CD4-positive, alpha-beta T cell (primary cell): ENCODE measurements at regions of chr10 and their contacts with region 1.

Region 1: GRCh38 chr10:31928549-31929260 is at the start of gene ARHGAP12:
- DNase-seq: peak; percentile 70 to 92 (median 82)
- ATAC-seq: peak; percentile 63
- H3K4me3 ChIP-seq: peak within 1 kb of the TSS; percentile 99
- H3K4me3 Mint-ChIP-seq: peak within 1 kb of the TSS; percentile 97
- H3K27ac ChIP-seq: peak within 1 kb of the TSS; percentile 69 to 77
- H3K27ac Mint-ChIP-seq: peak within 1 kb of the TSS; percentile 82
- H3K4me1 ChIP-seq: peaks cover 23% of the 10 kb centered on the region
- H3K4me1 Mint-ChIP-seq: peaks cover 53% of the 10 kb centered on the region
- H3K27me3 ChIP-seq: no peaks in the 10 kb centered on the region
- H3K27me3 Mint-ChIP-seq: no peaks in the 10 kb centered on the region
- CTCF ChIP-seq: no peak
- total RNA-seq, gene ARHGAP12: 40.3 to 41.1 TPM

Region 2: DNA sequence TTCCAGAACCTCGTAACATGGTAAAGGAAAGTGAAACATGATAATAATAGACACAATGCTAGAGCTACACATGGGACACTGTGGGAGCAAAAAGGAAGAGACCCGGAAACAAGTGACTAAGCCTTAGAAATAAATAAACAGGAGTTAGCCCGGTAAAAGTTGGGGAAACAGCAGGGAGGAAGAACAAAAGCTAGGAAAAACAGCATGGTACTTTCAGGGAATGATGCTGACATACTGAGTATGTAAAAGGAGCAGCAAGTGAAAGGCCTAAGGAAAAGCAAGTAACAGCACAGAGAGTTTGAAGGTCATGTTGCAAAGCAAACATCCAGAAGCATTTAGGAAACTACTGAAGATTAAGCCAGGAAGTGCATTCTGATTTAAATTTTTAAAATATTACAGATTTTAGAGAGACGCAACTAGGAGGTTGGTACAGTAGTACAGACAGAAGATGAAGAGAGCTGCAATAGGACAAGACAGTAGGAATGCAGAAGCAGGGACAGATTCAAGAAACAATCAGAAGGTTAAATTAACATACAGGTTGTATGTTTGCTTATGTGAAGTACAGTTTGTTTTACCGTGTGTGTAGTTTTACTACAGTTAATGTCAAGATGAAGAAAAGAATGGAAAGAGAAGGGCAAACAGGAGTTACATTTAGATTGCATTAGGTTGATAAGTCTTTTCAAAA is 63.7 kb before region 1 on chr10:
- CTCF ChIA-PET with region 1: interaction called, 3 read pairs
- POLR2A ChIA-PET with region 1: interaction called, 8 read pairs
- intact Hi-C with region 1: loop called (anchors 2 to 5 kb)
- DNase-seq: no peak
- ATAC-seq: no peak
- H3K4me3 ChIP-seq: no peak overlapping the region
- H3K4me3 Mint-ChIP-seq: no peak overlapping the region
- H3K27ac ChIP-seq: no peak overlapping the region
- H3K27ac Mint-ChIP-seq: peak overlapping the region; percentile 12
- H3K4me1 ChIP-seq: no peaks in the 10 kb centered on the region
- H3K4me1 Mint-ChIP-seq: peaks cover 39% of the 10 kb centered on the region
- H3K27me3 ChIP-seq: no peaks in the 10 kb centered on the region
- H3K27me3 Mint-ChIP-seq: no peaks in the 10 kb centered on the region
- CTCF ChIP-seq: no peak

Region 3: DNA sequence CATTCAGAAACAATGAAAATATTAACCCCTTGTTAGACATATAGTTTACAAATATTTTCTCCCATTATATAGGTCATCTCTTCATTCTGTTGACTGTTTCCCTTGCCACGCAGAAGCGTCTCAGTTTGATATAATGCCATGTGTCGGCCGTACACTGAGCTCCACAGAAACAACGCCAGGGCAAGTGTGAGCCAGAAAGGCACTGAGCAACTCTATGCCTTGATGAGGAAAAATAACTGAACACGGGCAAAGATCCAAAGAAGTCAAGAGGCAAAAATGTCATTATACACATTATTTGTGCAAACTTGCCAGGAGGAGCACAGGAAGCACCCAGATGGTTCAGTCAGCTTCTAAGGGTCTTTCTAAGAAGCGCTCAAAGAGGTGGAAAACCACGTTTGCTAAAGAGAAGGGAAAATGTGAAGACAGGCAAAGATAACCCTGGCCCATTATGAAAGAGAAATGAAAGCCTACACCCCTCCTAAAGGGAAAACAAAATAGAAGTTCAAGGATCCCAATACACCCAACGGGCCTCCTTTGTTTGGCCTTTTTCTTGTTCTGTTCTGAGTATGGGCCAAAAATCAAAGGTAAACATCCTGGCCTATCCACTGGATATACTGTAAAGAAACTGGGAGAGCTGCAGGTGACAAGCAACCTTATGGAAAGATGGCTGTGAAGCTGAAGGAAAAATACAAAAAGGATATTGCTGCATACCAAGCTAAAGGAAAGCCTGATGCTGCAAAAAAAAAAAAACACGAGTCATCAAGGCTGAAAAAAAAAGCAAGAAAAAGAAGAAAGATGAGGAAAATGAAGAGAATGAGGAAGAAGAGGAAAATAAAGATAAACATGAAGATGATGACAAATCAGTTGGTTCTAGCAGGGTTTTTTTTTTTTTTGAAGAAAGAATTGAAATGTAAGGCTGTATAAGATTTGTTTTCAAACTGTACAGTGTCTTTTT is 15.5 kb before region 1 on chr10:
- CTCF ChIA-PET with region 1: no interaction called
- POLR2A ChIA-PET with region 1: interaction called, 14 read pairs
- intact Hi-C with region 1: no loop called
- DNase-seq: no peak
- ATAC-seq: no peak
- H3K4me3 ChIP-seq: no peak overlapping the region
- H3K4me3 Mint-ChIP-seq: peak overlapping the region; percentile 3
- H3K27ac ChIP-seq: no peak overlapping the region
- H3K27ac Mint-ChIP-seq: no peak overlapping the region
- H3K4me1 ChIP-seq: peaks cover 5% of the 10 kb centered on the region
- H3K4me1 Mint-ChIP-seq: peaks cover 85% of the 10 kb centered on the region
- H3K27me3 ChIP-seq: no peaks in the 10 kb centered on the region
- H3K27me3 Mint-ChIP-seq: no peaks in the 10 kb centered on the region
- CTCF ChIP-seq: no peak

Region 4: GRCh38 chr10:32055813-32056600 is 127.3 kb after region 1 on chr10 and contains the start of gene KIF5B:
- CTCF ChIA-PET with region 1: no interaction called
- POLR2A ChIA-PET with region 1: interaction called, 6 read pairs
- intact Hi-C with region 1: loop called (anchors 2 to 5 kb)
- DNase-seq: peak; percentile 74 to 95 (median 84)
- ATAC-seq: peak; percentile 79
- H3K4me3 ChIP-seq: peak within 1 kb of the TSS; percentile 98
- H3K4me3 Mint-ChIP-seq: peak within 1 kb of the TSS; percentile 95
- H3K27ac ChIP-seq: peak within 1 kb of the TSS; percentile 77 to 92
- H3K27ac Mint-ChIP-seq: peak within 1 kb of the TSS; percentile 95
- H3K4me1 ChIP-seq: peaks cover 18% of the 10 kb centered on the region
- H3K4me1 Mint-ChIP-seq: peaks cover 54% of the 10 kb centered on the region
- H3K27me3 ChIP-seq: no peaks in the 10 kb centered on the region
- H3K27me3 Mint-ChIP-seq: no peaks in the 10 kb centered on the region
- CTCF ChIP-seq: no peak
- total RNA-seq, gene KIF5B: 58.3 to 59.0 TPM

Region 5: GRCh38 chr10:33134011-33134751 is 1205.5 kb after region 1 on chr10:
- CTCF ChIA-PET with region 1: no interaction called
- POLR2A ChIA-PET with region 1: no interaction called
- intact Hi-C with region 1: loop called in 1 of 2 experiments (anchors 10 kb)
- DNase-seq: peak in 13 of 14 experiments; percentile 49 to 90 (median 65)
- ATAC-seq: peak; percentile 67
- H3K4me3 ChIP-seq: no peak overlapping the region
- H3K4me3 Mint-ChIP-seq: peak overlapping the region; percentile 62
- H3K27ac ChIP-seq: peak overlapping the region; percentile 42 to 70
- H3K27ac Mint-ChIP-seq: peak overlapping the region; percentile 93
- H3K4me1 ChIP-seq: peaks cover 91% of the 10 kb centered on the region
- H3K4me1 Mint-ChIP-seq: peaks cover 88% of the 10 kb centered on the region
- H3K27me3 ChIP-seq: no peaks in the 10 kb centered on the region
- H3K27me3 Mint-ChIP-seq: no peaks in the 10 kb centered on the region
- CTCF ChIP-seq: no peak